ENCODE measurements at regions of chr17 and their contacts with region 1.

Region 1: DNA sequence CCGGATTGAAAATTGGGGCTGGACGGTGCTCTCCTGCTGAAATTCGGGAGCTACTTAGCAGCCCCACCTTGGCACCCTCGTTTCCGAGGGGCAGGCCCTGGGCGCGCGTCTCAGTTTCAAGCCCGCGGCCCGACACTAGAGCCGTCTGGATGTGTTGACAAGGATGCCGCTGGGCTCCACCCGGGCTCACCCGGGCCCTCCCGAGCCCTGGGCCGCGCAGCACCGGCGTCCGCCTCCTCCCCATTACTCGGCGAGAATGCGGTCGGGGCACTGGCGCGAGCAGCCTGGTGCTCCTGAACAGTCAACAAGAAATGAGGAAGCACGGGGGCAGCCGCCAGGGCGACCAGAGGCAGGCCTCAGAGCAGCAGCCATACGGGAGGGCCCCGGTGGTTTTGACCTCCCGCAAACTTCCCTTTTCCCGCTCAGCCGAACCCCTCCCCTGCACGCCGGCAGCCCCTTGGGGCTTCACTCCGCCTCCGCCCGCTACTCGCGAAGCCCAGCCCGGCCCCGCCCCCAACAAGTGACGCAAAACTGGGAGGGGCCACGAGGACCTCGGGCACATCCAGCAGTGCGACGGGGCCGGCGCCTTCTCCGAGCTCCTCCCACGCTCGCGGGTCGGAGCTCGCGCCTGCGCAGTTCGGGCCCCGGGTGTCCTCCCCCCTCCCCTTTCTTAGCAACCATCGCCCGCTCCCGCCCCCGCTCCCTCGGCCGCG is 447 bp upstream of the SEC14L1 start:
- DNase-seq: peak; percentile 96 to 100 (median 99)

Region 2: GRCh38 chr17:77214743-77215142 is 74.4 kb after region 1 on chr17:
- intact Hi-C with region 1: loop called (anchors 5 kb)
- DNase-seq: peak in 35 of 42 donors; percentile 32 to 82 (median 63)

Region 3: DNA sequence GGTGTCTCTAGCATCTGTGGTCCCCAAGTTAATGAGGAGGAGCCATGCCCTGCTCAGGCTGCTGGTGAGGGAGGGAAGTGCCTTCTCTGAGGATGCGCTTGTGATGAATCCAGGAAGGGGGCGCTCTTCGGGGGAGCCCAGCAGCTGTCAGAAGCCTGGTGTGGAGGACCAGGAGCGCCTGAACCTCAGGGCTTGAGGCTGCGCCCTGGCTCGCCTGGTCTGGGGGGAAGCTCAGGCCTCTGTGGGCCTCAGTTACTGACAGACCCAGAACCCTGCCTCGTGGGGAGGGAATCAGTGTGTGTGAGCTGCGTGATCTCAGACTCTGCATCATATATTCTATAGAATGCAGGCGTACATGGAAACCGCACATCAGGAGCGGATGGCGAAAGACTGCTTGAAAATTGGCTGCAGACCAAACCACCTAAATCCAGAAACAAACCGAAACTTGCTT is 126.6 kb after region 1 on chr17:
- intact Hi-C with region 1: no loop called
- DNase-seq: no peak

Region 4: DNA sequence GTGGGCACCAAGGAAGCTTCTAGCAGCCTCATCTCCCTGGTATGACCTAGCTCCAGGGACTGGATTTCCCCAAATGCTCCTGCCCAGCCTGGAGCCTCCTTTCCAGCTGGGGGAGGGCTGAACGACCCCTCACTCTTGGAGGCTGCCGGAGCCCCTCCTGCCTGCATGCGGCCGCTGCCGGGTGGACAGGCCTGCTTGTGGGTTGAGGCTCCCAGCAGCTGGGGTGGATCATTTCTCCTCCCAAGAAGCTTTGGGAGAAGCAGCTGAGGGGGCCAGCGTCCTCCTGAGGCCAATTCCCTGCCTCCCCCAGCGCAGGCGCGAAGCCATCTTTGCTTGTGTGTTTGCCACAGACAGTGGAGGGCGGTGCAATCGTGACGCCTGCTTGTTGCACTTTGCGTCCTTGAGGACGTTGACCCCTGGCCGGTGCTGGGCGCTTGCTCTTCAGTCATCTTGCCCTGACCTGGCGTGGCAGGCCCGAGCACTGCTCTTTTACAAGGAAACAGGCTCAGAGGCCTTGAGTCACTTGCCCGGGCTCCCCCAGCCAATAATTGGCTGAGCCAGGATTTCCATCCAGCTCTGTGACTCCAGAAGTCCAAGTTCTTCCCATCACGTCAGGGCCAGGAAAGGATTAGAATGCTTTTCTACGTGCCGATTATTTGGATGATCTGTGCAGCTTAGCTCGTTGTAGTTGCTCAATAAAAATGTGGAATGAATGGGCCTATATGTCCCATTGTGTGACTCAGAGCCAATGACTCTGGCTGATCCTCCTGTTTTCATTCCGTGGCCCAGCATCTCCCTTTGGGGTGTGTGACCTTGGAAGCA is 214.3 kb after region 1 on chr17:
- intact Hi-C with region 1: no loop called
- DNase-seq: peak in 6 of 42 donors; percentile 4 to 30 (median 11)